Gastrocnemius medialis (tissue), 4 donors: ENCODE measurements at regions of chr6 and their contacts with region 1.

Region 1: DNA sequence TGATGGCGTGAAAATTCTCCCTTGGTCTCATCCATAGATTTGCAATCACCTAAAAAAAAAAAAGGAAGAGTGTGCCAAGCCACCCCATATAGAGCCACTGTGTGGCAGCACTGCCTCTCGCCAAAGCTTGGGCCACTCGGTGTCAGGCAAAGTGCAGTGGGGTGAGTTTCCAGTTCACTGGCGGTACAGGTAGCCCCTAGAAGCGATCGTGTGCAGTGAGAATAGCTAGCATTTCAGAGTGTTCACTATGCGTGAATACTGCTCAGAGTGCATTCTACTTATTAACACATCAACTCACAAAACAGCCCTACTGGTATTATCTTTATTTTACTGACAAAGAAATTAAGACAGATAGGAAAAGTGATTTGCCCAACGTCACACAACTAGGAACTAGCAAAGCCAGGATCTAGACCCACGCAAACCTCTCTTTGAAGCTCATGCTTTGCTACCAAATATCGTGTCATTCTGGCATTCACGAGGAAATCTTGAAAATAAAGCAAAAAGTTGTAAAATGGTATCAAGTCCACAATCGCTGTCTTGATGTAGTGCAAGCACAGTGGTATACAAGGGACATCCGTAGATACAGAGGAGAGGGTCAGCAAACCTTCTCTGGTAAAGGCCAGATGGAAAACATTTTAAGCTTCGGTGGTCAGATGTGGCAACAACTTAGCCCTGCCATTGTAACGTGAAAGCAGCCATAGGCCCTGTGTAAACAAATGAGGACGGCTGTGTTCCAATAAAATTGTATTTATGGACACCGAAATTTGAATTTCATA is 10.4 kb upstream of the GCNT2 start:
- DNase-seq: peak in 1 of 2 donors; percentile 40
- ATAC-seq: peak; percentile 71 to 72
- H3K4me3 ChIP-seq: peak overlapping the region in 1 of 4 donors; percentile 3
- H3K27ac ChIP-seq: peak overlapping the region; percentile 12 to 71 (median 58)
- H3K4me1 ChIP-seq: peaks cover 0 to 7% of the 10 kb centered on the region in 2 donors
- H3K27me3 ChIP-seq: no peaks in the 10 kb centered on the region
- CTCF ChIP-seq: peak in 3 of 5 experiments; percentile 32 to 51 (median 44)
- POLR2A ChIP-seq: no peak

Region 2: GRCh38 chr6:10559522-10560152 is 48.9 kb after region 1 on chr6:
- in situ Hi-C with region 1: no loop called
- intact Hi-C with region 1: no loop called
- DNase-seq: no peak
- ATAC-seq: no peak
- H3K4me3 ChIP-seq: no peak overlapping the region
- H3K27ac ChIP-seq: no peak overlapping the region
- H3K4me1 ChIP-seq: peaks cover 4 to 7% of the 10 kb centered on the region in 2 donors
- H3K27me3 ChIP-seq: peaks cover 0 to 7% (median 0%) of the 10 kb centered on the region in 3 donors
- CTCF ChIP-seq: no peak
- POLR2A ChIP-seq: no peak

Region 3: DNA sequence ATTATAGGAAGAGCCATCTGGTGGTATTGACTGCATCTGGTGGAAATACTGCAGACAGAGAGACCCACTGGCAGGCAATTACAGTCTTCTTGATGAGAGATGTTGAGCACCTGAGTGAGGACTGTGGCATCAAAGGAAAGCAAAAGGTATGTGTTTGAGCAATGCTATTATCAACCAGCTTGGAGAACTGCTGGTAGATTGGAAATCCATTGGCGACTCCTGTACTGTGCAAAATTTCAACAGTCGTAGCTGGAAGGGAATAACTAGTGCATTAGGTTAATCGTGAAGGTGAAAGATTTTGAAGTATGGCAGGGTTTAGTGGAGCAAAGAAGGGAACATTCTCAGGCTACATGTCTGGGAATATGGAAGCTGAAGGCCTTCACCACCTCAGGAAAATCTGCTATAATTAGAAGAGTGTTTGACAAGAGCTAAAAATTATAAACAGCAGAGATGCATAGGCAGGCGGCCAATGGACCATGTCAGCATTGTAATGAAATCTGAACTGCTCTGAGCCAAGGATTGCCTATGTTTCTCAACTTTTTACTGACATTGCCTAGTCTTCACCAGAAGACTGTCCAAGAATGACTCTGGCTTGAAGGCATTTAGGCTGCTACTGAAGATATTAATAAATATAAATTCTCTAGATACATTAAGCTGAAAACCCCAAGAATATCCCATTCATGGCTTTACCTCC is 99.4 kb after region 1 on chr6:
- in situ Hi-C with region 1: no loop called
- intact Hi-C with region 1: loop called (anchors 2 kb)
- DNase-seq: peak in 1 of 2 donors; percentile 13
- ATAC-seq: peak; percentile 42 to 49
- H3K4me3 ChIP-seq: no peak overlapping the region
- H3K27ac ChIP-seq: peak overlapping the region in 1 of 4 donors; percentile 41
- H3K4me1 ChIP-seq: no peaks in the 10 kb centered on the region
- H3K27me3 ChIP-seq: no peaks in the 10 kb centered on the region
- CTCF ChIP-seq: no peak
- POLR2A ChIP-seq: no peak

Region 4: DNA sequence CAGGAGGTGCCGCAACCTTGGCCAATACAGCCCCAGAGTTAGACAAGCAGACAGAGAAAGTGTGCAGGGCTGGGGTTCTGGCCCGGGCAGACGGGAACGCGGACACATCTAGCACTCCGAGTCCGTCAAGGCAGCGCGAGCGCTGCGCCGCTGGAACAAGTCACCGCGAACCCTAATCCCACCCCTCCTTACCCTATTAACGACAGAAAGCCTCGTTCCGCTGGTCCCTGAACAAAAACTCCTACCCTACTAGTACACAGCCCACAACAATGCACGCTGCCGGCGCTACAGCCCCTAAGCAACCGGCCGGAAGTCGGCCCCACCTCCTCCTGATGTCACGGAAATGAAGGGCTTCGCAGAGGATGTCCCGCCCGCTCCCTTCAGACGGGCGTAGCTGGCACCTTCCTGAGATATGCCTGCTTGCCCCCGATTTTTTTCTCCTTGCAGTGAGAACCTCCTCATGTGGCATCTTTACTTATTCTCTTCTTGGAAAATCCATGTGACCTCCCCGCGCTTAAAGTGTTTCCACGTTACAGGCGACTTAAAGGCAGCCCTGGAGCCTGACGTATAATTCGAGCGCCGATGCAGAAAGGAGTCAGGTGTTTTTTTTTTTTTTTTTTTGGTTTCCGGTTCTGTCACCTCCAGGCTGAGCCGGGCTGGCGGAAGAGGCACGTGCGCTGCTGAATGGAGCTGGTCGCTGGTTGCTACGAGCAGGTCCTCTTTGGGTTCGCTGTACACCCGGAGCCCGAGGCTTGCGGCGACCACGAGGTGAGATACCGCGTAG is 183.7 kb after region 1 on chr6 and contains the starts of genes C6orf52 and PAK1IP1:
- in situ Hi-C with region 1: no loop called
- intact Hi-C with region 1: loop called (anchors 1 kb)
- DNase-seq: peak; percentile 88 to 91
- ATAC-seq: peak; percentile 99
- H3K4me3 ChIP-seq: peak within 1 kb of the TSS; percentile 71 to 96 (median 92)
- H3K27ac ChIP-seq: peak within 1 kb of the TSS; percentile 92 to 98 (median 93)
- H3K4me1 ChIP-seq: peaks cover 26 to 30% of the 10 kb centered on the region in 2 donors
- H3K27me3 ChIP-seq: no peaks in the 10 kb centered on the region
- CTCF ChIP-seq: no peak
- POLR2A ChIP-seq: peak; percentile 80 to 84
- total RNA-seq, gene C6orf52: 2.8 TPM in 1 of 4 donors, not detected in the others
- total RNA-seq, gene PAK1IP1: 5.5 to 18.8 (median 14.2) TPM

Region 5: GRCh38 chr6:10722820-10723566 is 212.2 kb after region 1 on chr6 and contains the start of gene TMEM14C:
- in situ Hi-C with region 1: no loop called
- intact Hi-C with region 1: loop called (anchors 1 kb)
- DNase-seq: peak; percentile 99
- ATAC-seq: peak; percentile 94 to 95
- H3K4me3 ChIP-seq: peak within 1 kb of the TSS; percentile 64 to 80 (median 74)
- H3K27ac ChIP-seq: peak within 1 kb of the TSS; percentile 87 to 96 (median 90)
- H3K4me1 ChIP-seq: peaks cover 26% of the 10 kb centered on the region in 2 donors
- H3K27me3 ChIP-seq: no peaks in the 10 kb centered on the region
- CTCF ChIP-seq: no peak
- POLR2A ChIP-seq: peak; percentile 72 to 79
- total RNA-seq, gene TMEM14C: 93.2 to 130 (median 117) TPM

Region 6: GRCh38 chr6:10747251-10747972 is 236.6 kb after region 1 on chr6 and contains the start of gene TMEM14B:
- in situ Hi-C with region 1: no loop called
- intact Hi-C with region 1: loop called (anchors 1 kb)
- DNase-seq: peak; percentile 99
- ATAC-seq: peak; percentile 97
- H3K4me3 ChIP-seq: peak within 1 kb of the TSS; percentile 69 to 91 (median 74)
- H3K27ac ChIP-seq: peak within 1 kb of the TSS; percentile 78 to 95 (median 86)
- H3K4me1 ChIP-seq: peaks cover 22 to 26% of the 10 kb centered on the region in 2 donors
- H3K27me3 ChIP-seq: no peaks in the 10 kb centered on the region
- CTCF ChIP-seq: no peak
- POLR2A ChIP-seq: peak; percentile 68 to 72
- total RNA-seq, gene TMEM14B: 68.3 to 93.8 (median 79.4) TPM

Region 7: DNA sequence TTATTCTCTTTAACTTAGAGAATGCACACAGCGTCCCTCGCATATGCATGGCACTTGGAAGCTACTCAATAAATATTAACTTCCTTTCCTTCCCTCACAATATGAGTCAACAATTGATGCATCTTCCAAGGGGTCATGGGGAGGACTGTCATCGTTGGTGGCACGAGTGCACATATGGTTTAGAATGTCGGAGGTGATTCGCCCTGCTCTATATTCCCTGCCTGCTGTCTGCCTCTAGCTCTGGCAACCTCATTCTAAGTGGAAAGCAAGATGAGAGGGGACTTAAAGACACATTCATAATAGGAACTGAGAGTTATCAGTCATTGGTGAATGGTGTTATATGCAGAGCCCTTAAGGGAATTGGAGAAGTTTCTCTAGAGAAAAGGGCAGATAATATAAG is 282.9 kb after region 1 on chr6:
- in situ Hi-C with region 1: loop called in 2 of 4 experiments (anchors 25 kb)
- intact Hi-C with region 1: loop called (anchors 10 kb)
- DNase-seq: no peak
- ATAC-seq: no peak
- H3K4me3 ChIP-seq: no peak overlapping the region
- H3K27ac ChIP-seq: no peak overlapping the region
- H3K4me1 ChIP-seq: no peaks in the 10 kb centered on the region
- H3K27me3 ChIP-seq: no peaks in the 10 kb centered on the region
- CTCF ChIP-seq: no peak
- POLR2A ChIP-seq: no peak

Region 8: DNA sequence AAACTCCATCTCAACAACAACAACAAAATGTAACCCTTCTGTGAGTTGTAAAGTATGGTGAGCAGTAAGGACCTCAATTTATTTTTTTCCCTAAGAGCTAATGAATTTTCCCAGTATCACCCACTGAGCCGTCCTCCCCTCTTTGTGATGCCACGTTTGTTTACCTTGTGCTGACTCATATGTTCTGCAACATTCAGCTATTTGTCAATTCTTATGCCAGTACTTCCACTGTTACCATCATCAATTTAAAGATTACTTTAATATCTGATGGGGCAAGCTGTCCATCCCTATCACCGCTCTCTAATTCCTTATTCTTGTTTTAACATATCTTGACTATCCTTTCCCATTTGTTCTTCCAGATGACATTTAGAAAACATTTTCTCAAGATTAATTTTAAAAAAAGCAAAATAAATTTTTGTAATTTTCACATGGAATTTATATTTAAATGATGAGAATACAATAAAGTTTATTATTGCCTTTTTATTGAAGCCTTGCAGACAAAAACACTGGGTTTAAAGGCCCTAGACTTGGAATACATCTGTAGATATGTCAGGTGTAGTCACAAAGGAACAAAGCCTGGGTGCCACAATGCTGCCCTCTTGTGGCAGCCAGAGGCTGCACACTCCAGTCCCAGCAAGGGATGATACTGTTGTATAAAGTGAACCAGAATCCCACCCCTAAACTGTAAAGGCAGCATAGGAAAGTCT is 290.2 kb after region 1 on chr6:
- in situ Hi-C with region 1: loop called in 3 of 4 experiments (anchors 25 kb)
- intact Hi-C with region 1: loop called (anchors 10 kb)
- DNase-seq: peak in 1 of 2 donors; percentile 28
- ATAC-seq: peak in 1 of 2 donors; percentile 76
- H3K4me3 ChIP-seq: no peak overlapping the region
- H3K27ac ChIP-seq: no peak overlapping the region
- H3K4me1 ChIP-seq: no peaks in the 10 kb centered on the region
- H3K27me3 ChIP-seq: no peaks in the 10 kb centered on the region
- CTCF ChIP-seq: peak; percentile 70 to 98 (median 81)
- POLR2A ChIP-seq: no peak

Region 9: DNA sequence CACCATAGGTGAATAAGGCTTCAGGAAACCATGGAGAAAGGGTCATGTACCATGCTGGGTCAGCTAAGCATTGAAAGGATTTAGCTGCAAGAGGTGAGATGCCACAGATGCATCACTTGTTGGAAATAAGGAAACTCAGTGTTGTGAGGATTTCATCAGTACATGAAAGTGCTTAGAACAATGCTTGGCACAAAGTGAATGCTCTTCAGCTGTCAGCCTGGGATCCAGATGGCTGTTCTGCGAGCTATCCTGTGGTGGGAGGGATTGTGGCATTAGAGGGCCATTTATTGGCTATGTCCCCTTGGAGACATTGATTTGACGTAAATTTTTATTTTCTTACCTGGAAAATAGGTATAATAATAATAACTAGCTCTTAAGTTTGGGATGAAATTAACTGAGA is 480.3 kb after region 1 on chr6:
- in situ Hi-C with region 1: no loop called
- intact Hi-C with region 1: no loop called
- DNase-seq: no peak
- ATAC-seq: no peak
- H3K4me3 ChIP-seq: no peak overlapping the region
- H3K27ac ChIP-seq: no peak overlapping the region
- H3K4me1 ChIP-seq: no peaks in the 10 kb centered on the region
- H3K27me3 ChIP-seq: no peaks in the 10 kb centered on the region
- CTCF ChIP-seq: no peak
- POLR2A ChIP-seq: no peak